ENCODE measurements at regions of chr22 and their contacts with region 1.

Region 1: DNA sequence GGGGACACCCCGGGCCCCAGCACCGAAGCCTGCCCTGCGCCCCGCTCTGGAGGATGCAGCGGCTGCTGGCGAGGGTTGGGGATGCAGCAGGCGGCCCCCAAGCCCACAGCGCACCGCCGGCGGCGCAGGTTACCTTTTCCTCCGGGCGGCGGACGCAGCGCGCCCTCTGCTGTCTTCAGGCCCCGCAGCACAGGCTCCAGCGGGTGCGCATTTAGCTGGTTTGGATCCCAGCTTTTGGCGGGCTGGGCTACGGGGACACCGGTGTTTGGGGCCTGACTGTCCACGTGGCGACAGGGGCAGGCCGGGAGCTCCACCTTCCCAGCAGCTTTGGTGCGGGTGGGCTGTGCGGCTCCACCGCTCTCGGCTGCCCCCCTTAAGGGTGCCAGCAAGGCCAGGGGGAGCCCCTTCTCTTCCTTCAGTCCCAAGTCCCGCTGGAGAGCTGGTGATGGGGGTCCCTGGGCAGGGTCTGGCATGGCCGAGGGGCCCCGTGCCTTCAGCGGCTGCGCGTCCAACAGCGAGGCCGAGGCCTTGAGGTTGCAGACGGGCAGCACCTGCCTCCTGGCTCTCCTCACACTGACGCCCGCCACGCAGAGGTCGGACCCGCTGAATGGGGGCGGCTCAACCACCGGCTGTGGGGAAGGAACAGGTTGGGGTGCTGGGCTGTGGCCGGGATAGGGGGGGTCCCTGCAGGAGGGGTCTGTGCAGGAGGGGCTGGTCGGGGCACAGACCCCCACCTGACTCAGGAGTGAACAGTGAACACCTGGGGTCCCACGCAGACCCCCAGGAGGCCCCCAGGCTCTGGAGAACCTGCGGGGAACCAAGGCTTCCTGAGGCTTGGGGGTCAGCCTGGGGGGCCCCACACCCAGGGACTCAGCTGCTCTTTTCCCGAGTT is 18.0 kb upstream of the IL17REL start:
- DNase-seq: peak; percentile 60
- H3K4me3 ChIP-seq: no peak overlapping the region
- H3K27ac ChIP-seq: no peak overlapping the region
- H3K4me1 ChIP-seq: peaks cover 10% of the 10 kb centered on the region
- H3K27me3 ChIP-seq: peaks cover 1% of the 10 kb centered on the region
- CTCF ChIP-seq: peak; percentile 77 to 91

Region 2: GRCh38 chr22:49738006-49738405 is 292.5 kb before region 1 on chr22:
- CTCF ChIA-PET with region 1: interaction called, 16 read pairs
- dilution Hi-C with region 1: no loop called
- in situ Hi-C with region 1: no loop called
- intact Hi-C with region 1: no loop called
- DNase-seq: no peak
- H3K4me3 ChIP-seq: no peak overlapping the region
- H3K27ac ChIP-seq: no peak overlapping the region
- H3K4me1 ChIP-seq: no peaks in the 10 kb centered on the region
- H3K27me3 ChIP-seq: no peaks in the 10 kb centered on the region
- CTCF ChIP-seq: no peak

Region 3: DNA sequence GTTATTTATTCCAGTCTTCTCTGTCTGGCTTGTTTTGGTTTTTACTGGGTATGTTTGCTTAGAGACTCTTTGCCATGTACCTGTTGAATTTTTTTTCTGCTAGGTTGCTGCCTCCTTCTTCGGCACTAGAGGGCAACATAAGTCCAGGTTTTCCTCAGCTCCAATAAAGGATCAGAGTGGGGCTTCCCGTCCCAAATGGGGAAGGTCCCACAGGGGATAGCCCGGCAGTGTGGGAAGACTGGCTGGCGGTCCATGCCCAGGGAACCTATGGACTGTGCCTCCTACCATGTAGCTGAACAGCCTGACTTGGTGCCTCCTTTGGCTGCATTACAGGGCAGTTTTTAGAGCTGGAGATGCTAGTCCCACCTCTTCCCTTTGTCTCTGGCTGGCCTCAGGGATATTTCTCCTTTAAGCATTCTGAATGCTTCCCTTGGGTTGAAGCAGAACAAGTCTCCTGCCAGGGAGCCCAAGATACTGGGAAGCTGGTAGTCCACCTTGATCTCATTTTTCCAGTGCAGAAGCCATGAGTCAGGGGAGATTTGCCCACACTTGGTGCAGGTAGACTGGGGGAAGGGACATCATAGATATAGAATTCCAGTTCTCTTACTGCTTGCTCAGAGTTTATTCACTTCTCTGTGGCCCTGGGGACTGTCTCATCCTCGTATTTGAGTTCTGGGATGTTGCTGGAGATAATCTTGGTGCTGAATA is 263.0 kb before region 1 on chr22:
- CTCF ChIA-PET with region 1: interaction called, 3 read pairs
- dilution Hi-C with region 1: no loop called
- in situ Hi-C with region 1: loop called (anchors 10 to 25 kb)
- intact Hi-C with region 1: loop called (anchors 1 kb)
- DNase-seq: peak; percentile 52
- H3K4me3 ChIP-seq: no peak overlapping the region
- H3K27ac ChIP-seq: no peak overlapping the region
- H3K4me1 ChIP-seq: peaks cover 10% of the 10 kb centered on the region
- H3K27me3 ChIP-seq: no peaks in the 10 kb centered on the region
- CTCF ChIP-seq: peak; percentile 71 to 82

Region 4: GRCh38 chr22:49827853-49828598 is 202.5 kb before region 1 on chr22 and contains the start of gene BRD1:
- CTCF ChIA-PET with region 1: no interaction called
- dilution Hi-C with region 1: no loop called
- in situ Hi-C with region 1: no loop called
- intact Hi-C with region 1: no loop called
- DNase-seq: peak; percentile 49
- H3K4me3 ChIP-seq: peak within 1 kb of the TSS; percentile 66 to 91 (median 75)
- H3K27ac ChIP-seq: peak within 1 kb of the TSS; percentile 77
- H3K4me1 ChIP-seq: peaks cover 25% of the 10 kb centered on the region
- H3K27me3 ChIP-seq: no peaks in the 10 kb centered on the region
- CTCF ChIP-seq: no peak
- total RNA-seq, gene BRD1: 25.5 to 26.9 TPM

Region 5: DNA sequence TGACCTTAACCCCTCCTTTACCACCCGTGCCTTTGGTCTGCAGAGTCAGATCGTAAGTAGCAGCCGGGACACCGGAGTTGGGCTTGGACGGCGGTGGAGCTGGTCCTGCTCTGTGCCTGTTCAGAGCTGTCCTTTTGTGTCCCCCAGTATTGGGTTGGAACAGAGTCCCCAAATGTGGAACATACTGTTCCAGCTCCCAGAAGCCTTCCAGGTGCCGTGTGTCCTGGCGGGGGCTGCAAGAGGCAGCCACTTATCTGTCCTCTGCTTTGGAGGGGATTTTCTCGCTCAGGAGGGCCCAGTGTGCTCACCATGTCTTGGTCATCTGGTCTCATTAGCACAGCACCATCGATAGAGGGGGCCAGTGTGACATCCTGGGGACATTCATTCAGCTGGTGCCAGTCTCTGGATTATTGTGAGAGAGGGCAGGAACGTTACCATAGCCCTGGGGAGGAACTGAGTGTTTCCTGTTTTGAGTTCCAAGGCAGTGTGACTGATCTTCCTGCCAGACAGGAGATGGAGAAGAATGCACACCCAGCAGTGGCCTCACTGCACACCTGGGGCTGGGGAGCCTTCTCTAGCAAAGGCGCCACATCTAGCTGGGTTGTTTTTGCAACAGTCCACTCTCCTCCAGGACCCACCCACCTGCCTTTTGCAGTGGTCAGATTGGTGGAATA is 99.7 kb before region 1 on chr22:
- CTCF ChIA-PET with region 1: interaction called, 10 read pairs
- dilution Hi-C with region 1: no loop called
- in situ Hi-C with region 1: loop called (anchors 5 kb)
- intact Hi-C with region 1: loop called (anchors 1 kb)
- DNase-seq: peak; percentile 69
- H3K4me3 ChIP-seq: no peak overlapping the region
- H3K27ac ChIP-seq: no peak overlapping the region
- H3K4me1 ChIP-seq: peaks cover 13% of the 10 kb centered on the region
- H3K27me3 ChIP-seq: no peaks in the 10 kb centered on the region
- CTCF ChIP-seq: peak; percentile 20 to 73

Region 6: DNA sequence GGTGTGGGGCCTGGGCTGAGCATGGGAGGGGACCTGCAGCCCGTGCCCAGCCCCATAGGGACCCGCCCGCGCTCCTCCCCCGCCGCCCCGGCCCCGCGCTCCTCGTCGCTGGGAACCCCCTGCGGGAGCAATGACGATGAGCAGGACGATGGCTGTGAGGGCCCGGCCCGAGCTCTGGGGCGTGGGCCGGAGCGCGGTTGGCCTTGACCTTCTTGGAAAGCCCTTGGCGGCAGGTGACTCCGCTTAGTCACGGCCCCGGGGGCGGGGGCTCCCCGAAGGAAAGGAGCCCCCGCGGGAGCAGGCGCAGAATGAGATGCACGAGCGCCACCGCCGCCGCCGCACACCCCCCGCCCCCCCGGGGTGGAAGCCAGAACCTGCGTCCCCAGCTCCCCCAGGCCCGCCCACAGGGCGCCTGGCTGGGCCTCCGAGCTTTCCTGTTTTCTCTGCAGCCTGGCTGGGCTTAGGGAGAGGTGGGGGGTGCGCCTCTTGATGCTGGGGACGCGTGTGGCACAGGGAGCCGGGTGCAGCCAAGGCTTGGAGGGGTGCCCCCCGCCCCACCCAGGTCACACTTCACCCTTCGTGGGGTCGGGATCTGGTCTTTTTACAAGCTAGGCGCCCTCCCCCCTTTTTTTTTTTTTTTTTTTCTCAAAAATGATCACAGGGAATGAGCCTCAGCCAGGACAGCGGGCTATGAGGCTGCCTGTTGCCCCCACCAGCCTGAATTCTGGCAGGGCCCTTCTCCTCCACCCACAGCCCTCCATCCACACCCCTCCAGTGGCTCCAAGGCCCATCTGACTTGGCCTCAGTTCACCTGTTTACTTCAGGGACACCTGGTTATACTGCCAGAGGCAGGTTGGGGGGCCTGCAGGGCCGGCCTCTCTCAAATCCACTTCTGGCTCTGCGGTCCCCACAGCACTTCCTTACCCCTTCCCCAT is 94.3 kb before region 1 on chr22:
- CTCF ChIA-PET with region 1: interaction called, 10 read pairs
- dilution Hi-C with region 1: no loop called
- in situ Hi-C with region 1: loop called (anchors 5 kb)
- intact Hi-C with region 1: loop called (anchors 1 kb)
- DNase-seq: peak; percentile 87
- H3K4me3 ChIP-seq: peak overlapping the region in 1 of 3 experiments; percentile 23
- H3K27ac ChIP-seq: no peak overlapping the region
- H3K4me1 ChIP-seq: peaks cover 18% of the 10 kb centered on the region
- H3K27me3 ChIP-seq: no peaks in the 10 kb centered on the region
- CTCF ChIP-seq: no peak

Region 7: GRCh38 chr22:49979587-49980264 is 50.8 kb before region 1 on chr22:
- CTCF ChIA-PET with region 1: no interaction called
- dilution Hi-C with region 1: no loop called
- in situ Hi-C with region 1: no loop called
- intact Hi-C with region 1: loop called (anchors 5 kb)
- DNase-seq: no peak
- H3K4me3 ChIP-seq: no peak overlapping the region
- H3K27ac ChIP-seq: no peak overlapping the region
- H3K4me1 ChIP-seq: peaks cover 7% of the 10 kb centered on the region
- H3K27me3 ChIP-seq: peaks cover 6% of the 10 kb centered on the region
- CTCF ChIP-seq: peak; percentile 55 to 77

Region 8: DNA sequence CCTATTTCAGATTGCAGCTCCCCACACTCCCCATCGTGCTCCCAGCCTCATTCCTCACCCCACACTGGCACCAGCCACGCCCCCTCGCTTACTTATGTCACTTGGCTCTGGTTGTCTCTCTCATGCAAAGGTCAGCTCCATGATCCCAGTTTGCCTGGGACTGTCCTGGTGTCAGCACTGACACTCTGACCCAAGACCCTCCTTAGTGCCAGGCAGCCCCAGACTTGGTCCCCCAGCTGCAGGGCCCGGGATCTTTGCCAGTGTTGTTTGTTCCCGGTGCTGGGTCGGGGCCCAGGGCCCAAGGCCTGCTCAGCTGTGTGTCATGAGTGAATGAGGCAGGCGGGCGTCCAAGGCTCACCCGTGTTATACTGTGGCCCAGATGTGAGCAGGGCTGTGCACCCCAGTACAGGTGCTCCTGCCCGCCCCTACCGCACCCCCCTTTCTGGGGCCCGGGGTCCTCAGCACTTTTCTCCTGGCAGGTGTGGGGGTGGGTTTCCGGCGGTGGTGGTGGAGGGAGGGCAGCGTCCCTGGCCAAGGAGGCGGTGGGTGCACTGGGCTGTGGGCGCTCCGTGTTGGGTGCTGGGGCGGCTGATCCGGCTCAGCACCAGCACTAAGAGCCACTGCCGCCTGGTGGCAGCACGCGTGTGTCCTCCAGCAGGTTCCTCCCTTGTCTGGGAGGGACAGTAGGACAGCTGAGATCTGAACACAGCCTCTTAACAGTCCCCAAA is 37.5 kb before region 1 on chr22:
- CTCF ChIA-PET with region 1: no interaction called
- dilution Hi-C with region 1: no loop called
- in situ Hi-C with region 1: no loop called
- intact Hi-C with region 1: loop called (anchors 1 kb)
- DNase-seq: peak; percentile 25
- H3K4me3 ChIP-seq: no peak overlapping the region
- H3K27ac ChIP-seq: no peak overlapping the region
- H3K4me1 ChIP-seq: no peaks in the 10 kb centered on the region
- H3K27me3 ChIP-seq: no peaks in the 10 kb centered on the region
- CTCF ChIP-seq: peak; percentile 59 to 83

Region 9: DNA sequence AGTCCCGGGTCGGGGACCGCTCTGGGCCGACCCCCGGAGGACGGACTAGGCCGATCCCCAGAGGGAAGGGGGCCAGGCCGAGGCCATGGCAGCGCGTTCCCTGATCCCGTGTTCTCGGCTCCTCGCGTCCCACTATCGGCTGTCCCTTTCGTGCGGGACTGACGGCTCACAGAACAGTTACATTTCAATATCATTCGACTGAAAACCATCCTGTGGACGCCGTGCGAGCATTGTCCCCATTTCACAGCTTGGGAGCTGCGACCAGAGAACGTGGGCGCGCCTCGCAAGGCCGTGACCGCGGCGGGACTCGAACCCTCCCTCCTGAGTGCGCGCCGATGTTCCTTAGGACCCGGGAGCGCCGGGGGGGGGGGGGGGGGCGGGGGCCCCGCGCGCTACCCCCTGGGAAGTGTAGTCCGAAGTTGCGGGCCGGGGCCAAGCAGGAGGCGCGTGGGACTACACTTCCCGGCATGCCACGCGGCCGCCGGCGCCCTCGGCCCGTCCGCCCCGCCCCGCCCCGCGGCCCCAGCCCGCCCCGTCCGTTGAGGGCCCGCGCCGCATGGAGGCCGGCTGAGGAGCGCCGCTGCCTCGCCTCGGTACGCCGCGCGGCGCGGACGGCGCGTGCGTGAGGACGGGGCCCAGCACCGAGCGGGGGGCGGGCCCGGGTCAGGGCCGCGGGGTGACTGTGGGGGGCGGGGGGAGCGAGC is 155.0 kb after region 1 on chr22 and contains the start of gene TRABD:
- CTCF ChIA-PET with region 1: no interaction called
- dilution Hi-C with region 1: no loop called
- in situ Hi-C with region 1: no loop called
- intact Hi-C with region 1: no loop called
- DNase-seq: peak; percentile 81
- H3K4me3 ChIP-seq: peak within 1 kb of the TSS; percentile 75 to 98 (median 75)
- H3K27ac ChIP-seq: peak within 1 kb of the TSS; percentile 40
- H3K4me1 ChIP-seq: peaks cover 38% of the 10 kb centered on the region
- H3K27me3 ChIP-seq: no peaks in the 10 kb centered on the region
- CTCF ChIP-seq: no peak
- total RNA-seq, gene TRABD: 25.8 to 63.5 TPM

Region 10: DNA sequence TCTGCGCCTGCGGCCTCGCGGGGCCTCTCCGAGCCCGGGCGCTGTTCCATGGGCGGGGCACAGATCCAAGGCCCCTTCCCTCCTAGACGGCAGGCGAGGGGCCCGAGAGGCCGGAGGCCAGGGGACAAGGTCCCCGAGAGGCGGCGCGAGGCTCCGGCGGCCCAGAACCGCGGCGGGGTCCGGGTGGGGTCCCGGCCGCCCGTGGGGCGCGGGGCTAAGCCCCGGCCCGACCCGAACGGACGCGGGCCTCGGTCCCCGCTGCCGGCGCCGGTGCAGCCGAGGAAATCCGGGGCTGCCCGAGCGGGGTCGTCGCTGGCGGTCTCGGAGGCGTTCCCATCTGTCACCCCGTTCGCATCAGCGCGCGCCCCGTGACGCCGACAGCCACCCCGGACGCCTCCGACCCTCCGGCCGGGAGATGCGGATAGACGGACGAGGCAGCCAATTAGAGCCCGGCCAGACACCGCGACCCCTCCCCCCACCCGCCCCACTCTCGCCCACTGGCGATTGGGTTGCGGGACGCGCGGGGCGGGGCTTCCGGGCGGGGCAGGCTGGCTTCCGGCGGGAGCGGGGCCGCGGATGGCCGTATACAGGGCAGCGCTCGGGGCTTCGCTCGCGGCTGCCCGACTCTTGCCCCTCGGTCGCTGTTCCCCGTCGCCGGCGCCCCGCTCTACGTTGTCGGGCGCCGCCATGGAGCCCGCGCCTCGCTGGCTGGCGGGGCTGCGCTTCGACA is 170.1 kb after region 1 on chr22 and contains the start of gene SELENOO:
- CTCF ChIA-PET with region 1: no interaction called
- dilution Hi-C with region 1: no loop called
- in situ Hi-C with region 1: no loop called
- intact Hi-C with region 1: no loop called
- DNase-seq: peak; percentile 85
- H3K4me3 ChIP-seq: peak within 1 kb of the TSS; percentile 63 to 86 (median 78)
- H3K27ac ChIP-seq: peak within 1 kb of the TSS; percentile 7
- H3K4me1 ChIP-seq: peaks cover 14% of the 10 kb centered on the region
- H3K27me3 ChIP-seq: no peaks in the 10 kb centered on the region
- CTCF ChIP-seq: no peak
- total RNA-seq, gene SELENOO: 21.5 to 36.9 TPM